OCI-LY7 (cell line): ENCODE measurements at regions of chr2 and their contacts with region 1.

Region 1: GRCh38 chr2:190534310-190535120 is at the start of gene NEMP2:
- DNase-seq: peak; percentile 87
- H3K4me3 ChIP-seq: peak within 1 kb of the TSS; percentile 74
- H3K27ac ChIP-seq: peak within 1 kb of the TSS; percentile 86
- H3K4me1 ChIP-seq: peaks cover 35% of the 10 kb centered on the region
- CTCF ChIP-seq: no peak
- total RNA-seq, gene NEMP2: 5.1 and 5.6 TPM in 2 replicates

Region 2: DNA sequence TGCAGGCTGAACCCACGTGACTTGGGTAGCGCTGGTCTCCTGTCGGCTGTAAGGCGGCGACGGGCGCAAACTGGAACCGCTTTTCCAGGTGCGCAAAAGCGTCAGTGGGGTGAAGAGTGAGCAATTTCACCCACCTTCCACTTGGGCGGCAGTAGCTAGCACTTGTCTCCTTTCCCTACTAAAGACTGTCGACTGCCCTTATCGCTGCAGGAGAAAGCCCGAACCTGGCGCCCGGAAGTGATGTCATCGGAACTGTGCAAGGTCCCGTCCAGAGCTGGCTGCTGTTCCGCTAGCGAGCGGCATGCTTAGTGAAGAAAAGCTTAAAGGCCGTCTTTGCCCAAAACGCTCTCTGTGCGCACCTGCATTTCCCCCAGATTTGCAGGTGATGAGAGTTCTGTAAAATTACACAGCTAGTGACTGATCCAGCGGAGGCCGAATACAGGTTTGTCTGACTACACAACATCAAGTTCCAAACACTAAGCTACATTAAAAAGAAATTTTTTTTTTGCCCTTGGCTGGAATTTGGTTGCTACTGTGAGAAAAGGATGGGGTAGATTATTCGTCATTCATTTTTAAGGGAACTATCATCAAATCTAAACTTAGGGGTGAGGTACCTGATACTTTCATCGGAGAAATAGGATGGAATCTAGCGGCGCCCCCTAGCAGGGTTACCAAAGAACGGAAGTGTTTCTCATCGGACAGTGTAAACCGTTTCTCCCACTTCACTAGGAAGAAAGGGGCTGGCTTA is 771.8 kb before region 1 on chr2 and contains the start of gene OSGEPL1:
- CTCF ChIA-PET with region 1: no interaction called
- POLR2A ChIA-PET with region 1: interaction called, 3 read pairs
- intact Hi-C with region 1: loop called (anchors 10 kb)
- DNase-seq: peak; percentile 96
- H3K4me3 ChIP-seq: peak within 1 kb of the TSS; percentile 82
- H3K27ac ChIP-seq: peak within 1 kb of the TSS; percentile 97
- H3K4me1 ChIP-seq: peaks cover 20% of the 10 kb centered on the region
- CTCF ChIP-seq: peak; percentile 85
- total RNA-seq, gene OSGEPL1: 8.7 and 10.4 TPM in 2 replicates

Region 3: GRCh38 chr2:190110131-190110530 is 424.4 kb before region 1 on chr2:
- CTCF ChIA-PET with region 1: no interaction called
- POLR2A ChIA-PET with region 1: no interaction called
- intact Hi-C with region 1: no loop called
- DNase-seq: no peak
- H3K4me3 ChIP-seq: no peak overlapping the region
- H3K27ac ChIP-seq: no peak overlapping the region
- H3K4me1 ChIP-seq: no peaks in the 10 kb centered on the region
- CTCF ChIP-seq: no peak

Region 4: DNA sequence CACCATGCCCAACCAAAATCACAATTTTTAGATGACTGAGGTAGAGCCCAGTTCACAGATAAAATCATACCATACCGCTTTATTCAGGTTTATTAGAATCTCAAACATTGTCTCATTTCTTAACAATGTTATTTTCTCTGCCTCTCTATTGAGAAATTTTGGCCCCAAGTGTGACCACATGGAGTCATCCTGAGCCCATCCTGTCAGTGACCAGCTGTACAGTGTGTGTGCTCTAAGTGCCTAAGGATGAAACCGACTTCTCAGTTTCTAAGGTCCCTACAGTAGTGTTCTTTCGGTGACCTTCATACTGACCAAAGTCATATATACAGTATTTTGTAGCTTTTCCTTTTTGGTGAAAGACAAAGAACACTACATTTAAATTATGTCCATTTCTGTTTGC is 348.3 kb before region 1 on chr2:
- CTCF ChIA-PET with region 1: no interaction called
- POLR2A ChIA-PET with region 1: no interaction called
- intact Hi-C with region 1: loop called (anchors 5 kb)
- DNase-seq: no peak
- H3K4me3 ChIP-seq: no peak overlapping the region
- H3K27ac ChIP-seq: no peak overlapping the region
- H3K4me1 ChIP-seq: peaks cover 9% of the 10 kb centered on the region
- CTCF ChIP-seq: no peak

Region 5: GRCh38 chr2:190408538-190409271 is 125.8 kb before region 1 on chr2:
- CTCF ChIA-PET with region 1: no interaction called
- POLR2A ChIA-PET with region 1: interaction called, 5 read pairs
- intact Hi-C with region 1: loop called (anchors 1 kb)
- DNase-seq: peak; percentile 65
- H3K4me3 ChIP-seq: peak overlapping the region; percentile 84
- H3K27ac ChIP-seq: peak overlapping the region; percentile 46
- H3K4me1 ChIP-seq: peaks cover 16% of the 10 kb centered on the region
- CTCF ChIP-seq: no peak

Region 6: DNA sequence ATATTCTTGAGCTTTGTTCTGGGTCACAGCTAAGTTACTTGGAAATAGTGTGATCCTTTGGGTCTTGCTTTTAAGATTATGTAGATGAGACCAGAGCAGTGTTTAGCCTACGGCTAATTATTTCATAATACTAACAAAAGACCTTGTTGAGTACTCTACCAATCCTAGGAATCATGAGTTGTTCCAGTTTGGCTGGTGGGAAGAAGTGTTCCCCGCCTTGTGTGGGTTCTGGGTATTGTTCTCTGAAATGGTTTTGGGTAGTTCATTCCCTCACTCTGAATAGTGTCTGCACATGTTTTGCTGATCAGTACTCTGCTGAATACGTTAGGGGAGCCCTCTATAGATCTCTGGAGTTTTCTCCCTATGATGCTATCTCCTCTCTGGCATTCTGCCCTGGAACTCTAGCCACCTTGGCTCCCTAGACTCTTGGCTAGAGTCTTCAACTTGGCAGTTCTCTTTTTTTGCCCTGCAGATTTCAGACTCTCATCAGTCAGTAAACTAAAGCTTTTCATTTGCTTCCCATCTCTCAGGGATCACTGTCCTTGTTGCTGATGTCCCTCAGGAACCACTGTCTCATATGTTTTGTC is 48.4 kb before region 1 on chr2:
- CTCF ChIA-PET with region 1: no interaction called
- POLR2A ChIA-PET with region 1: no interaction called
- intact Hi-C with region 1: no loop called
- DNase-seq: no peak
- H3K4me3 ChIP-seq: no peak overlapping the region
- H3K27ac ChIP-seq: no peak overlapping the region
- H3K4me1 ChIP-seq: no peaks in the 10 kb centered on the region
- CTCF ChIP-seq: no peak

Region 7: DNA sequence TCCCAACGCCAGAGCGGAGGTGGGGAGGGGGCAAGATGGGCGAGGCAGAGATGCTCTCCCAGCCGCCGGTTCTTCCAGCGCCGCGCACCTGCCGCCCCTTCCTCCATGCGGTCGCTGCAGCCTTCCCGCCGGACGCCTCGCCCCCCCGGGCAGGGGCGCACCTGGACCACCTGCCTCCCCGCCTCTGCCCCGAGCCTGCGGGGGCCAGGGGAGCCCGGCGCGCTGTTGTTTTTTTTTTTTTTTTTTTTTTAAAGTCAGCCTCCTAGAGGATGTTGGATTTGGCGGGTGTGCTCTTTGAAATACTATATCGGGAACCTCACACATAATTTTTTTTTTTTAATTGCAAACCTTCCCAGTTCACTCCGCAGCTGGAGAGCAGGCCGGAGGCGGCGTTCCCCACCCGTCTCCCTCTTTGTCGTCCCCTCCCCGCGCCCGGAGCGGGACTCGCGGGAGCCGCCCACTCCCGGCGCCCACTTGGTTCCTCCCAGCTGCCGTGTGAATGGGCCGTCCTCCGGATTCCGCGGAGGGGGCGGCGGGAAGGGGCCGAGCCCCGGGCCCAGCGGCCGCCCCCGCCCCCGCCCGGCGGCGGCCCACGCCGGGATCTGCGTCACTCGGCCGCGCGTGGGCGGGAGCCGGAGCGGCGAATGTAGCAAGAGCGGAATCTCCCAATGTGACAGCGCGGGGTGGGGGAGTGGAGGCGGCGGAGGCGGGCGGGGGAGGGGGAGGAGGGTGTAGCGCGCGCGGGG is 113.9 kb after region 1 on chr2:
- CTCF ChIA-PET with region 1: no interaction called
- POLR2A ChIA-PET with region 1: interaction called, 3 read pairs
- intact Hi-C with region 1: loop called (anchors 1 kb)
- DNase-seq: peak; percentile 81
- H3K4me3 ChIP-seq: peak overlapping the region; percentile 85
- H3K27ac ChIP-seq: peak overlapping the region; percentile 31
- H3K4me1 ChIP-seq: peaks cover 15% of the 10 kb centered on the region
- CTCF ChIP-seq: no peak

Region 8: GRCh38 chr2:191677646-191678436 is 1143.3 kb after region 1 on chr2 and contains the start of gene NABP1:
- CTCF ChIA-PET with region 1: no interaction called
- POLR2A ChIA-PET with region 1: no interaction called
- intact Hi-C with region 1: loop called (anchors 5 kb)
- DNase-seq: peak; percentile 97
- H3K4me3 ChIP-seq: peak within 1 kb of the TSS; percentile 84
- H3K27ac ChIP-seq: peak within 1 kb of the TSS; percentile 59
- H3K4me1 ChIP-seq: peaks cover 47% of the 10 kb centered on the region
- CTCF ChIP-seq: no peak
- total RNA-seq, gene NABP1: 16.7 and 18.9 TPM in 2 replicates